A549 (cell line): ENCODE measurements at regions of chr19 and their contacts with region 1.

Region 1: GRCh38 chr19:29528350-29528945 is 2.7 kb downstream of the VSTM2B start:
- DNase-seq: peak; percentile 90 to 91
- ATAC-seq: peak; percentile 78 to 94
- H3K4me3 ChIP-seq: peak overlapping the region; percentile 47
- H3K27ac ChIP-seq: peak overlapping the region in 1 of 2 experiments; percentile 53; a peak in 3 of 6 replicates
- H3K4me1 ChIP-seq: peaks cover 12% of the 10 kb centered on the region
- CTCF ChIP-seq: peak; percentile 96
- EP300 ChIP-seq: no peak
- POLR2A ChIP-seq: no peak
- RAD21 ChIP-seq: peak; percentile 93 to 97

Region 2: GRCh38 chr19:29233591-29233990 is 294.9 kb before region 1 on chr19:
- CTCF ChIA-PET with region 1: no interaction called
- POLR2A ChIA-PET with region 1: no interaction called
- DNase-seq: no peak
- ATAC-seq: no peak; a peak in 2 of 6 replicates
- H3K4me3 ChIP-seq: no peak overlapping the region
- H3K27ac ChIP-seq: no peak overlapping the region
- H3K4me1 ChIP-seq: no peaks in the 10 kb centered on the region
- CTCF ChIP-seq: no peak
- EP300 ChIP-seq: no peak
- POLR2A ChIP-seq: no peak
- RAD21 ChIP-seq: no peak

Region 3: DNA sequence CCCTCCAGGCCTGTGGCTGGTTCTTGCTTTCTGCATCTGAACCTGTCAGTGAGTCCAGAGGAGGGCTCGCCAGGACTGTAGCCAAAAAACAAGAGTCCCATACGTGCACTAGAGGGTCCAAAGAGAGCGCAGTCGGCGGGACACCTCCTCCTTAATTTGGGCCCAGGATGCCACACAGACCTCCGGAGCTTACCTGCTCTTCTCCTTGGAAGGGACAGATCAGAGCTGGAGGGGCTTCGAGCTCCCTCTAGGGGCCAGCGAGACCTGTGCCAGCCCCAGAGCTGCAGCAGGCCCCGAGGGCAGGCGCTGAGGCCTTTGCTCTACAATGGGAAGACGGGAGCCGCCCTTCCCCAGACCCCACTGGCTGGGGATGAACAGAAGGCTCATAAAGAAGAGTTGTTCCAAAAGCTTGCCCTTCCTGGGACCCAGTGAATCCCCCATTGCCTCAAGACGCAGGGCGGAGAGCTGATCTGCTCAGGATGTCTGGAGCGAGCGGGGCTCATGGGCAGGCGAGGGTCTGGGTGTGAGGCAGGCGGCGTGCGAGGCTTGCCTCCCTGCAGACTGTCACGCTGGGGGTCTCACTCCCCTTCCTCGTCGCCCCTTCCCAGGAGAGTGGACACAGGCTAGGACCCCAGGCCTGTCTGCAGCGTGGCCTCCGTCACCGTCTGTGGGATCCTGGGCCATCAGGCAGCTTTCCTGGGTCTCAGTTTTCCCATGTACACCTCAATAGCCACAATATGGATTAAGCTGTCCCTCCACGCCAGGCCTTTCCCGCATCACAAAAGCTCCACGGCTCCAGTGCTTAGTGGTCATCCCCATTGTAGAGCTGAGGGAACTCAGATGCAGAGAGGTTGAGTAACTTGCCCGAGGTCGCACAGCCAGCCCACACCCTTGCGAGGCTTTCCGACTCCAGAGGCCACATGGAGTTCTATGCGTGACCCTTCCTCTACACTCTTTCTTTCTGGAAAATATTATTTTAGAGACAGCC is 49.6 kb before region 1 on chr19:
- CTCF ChIA-PET with region 1: interaction called, 11 read pairs
- POLR2A ChIA-PET with region 1: no interaction called
- DNase-seq: peak; percentile 50 to 55
- ATAC-seq: peak; percentile 78 to 96
- H3K4me3 ChIP-seq: no peak overlapping the region
- H3K27ac ChIP-seq: no peak overlapping the region
- H3K4me1 ChIP-seq: no peaks in the 10 kb centered on the region
- CTCF ChIP-seq: peak; percentile 40
- EP300 ChIP-seq: no peak
- POLR2A ChIP-seq: no peak
- RAD21 ChIP-seq: peak; percentile 38 to 55; a peak in 3 of 5 replicates

Region 4: GRCh38 chr19:29503140-29503758 is 25.2 kb before region 1 on chr19:
- CTCF ChIA-PET with region 1: interaction called, 10 read pairs
- POLR2A ChIA-PET with region 1: no interaction called
- DNase-seq: no peak
- ATAC-seq: no peak
- H3K4me3 ChIP-seq: no peak overlapping the region
- H3K27ac ChIP-seq: no peak overlapping the region
- H3K4me1 ChIP-seq: no peaks in the 10 kb centered on the region
- CTCF ChIP-seq: no peak
- EP300 ChIP-seq: no peak
- POLR2A ChIP-seq: no peak
- RAD21 ChIP-seq: no peak

Region 5: DNA sequence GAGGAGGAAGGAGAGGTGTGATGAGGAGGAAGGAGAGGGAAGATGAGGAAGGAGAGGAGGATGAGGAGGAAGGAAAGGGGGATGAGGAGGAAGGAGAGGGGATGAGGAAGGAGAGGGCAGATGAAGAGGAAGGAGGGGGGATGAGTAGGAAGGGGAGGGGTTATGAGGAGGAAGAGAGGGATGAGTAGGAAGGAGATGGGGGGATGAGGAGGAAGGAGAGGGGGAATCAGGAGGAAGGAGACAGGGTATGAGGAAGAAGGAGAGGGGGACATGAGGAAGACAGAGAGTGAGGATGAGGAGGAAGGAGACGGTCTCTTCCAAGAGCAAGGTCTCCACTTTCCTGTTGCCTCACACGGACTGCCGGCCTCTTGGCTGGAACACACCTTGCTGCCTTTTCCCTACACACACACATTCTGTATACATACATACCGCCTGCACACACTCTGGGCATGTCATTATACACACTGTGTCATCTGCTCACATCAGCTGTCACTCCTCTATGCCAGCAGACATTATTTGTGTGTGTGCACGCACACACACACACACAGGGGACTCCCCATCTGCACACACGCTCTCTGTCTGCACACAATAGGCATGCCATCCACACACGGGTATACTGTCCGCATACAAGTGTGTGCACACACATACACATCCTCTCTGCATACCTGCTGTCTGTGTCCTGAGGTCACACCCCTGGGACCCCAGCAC is 13.8 kb before region 1 on chr19:
- CTCF ChIA-PET with region 1: interaction called, 47 read pairs
- POLR2A ChIA-PET with region 1: no interaction called
- DNase-seq: peak in 1 of 2 experiments; percentile 59
- ATAC-seq: peak; percentile 62 to 76
- H3K4me3 ChIP-seq: no peak overlapping the region
- H3K27ac ChIP-seq: no peak overlapping the region
- H3K4me1 ChIP-seq: no peaks in the 10 kb centered on the region
- CTCF ChIP-seq: no peak
- EP300 ChIP-seq: no peak
- POLR2A ChIP-seq: no peak
- RAD21 ChIP-seq: no peak

Region 6: GRCh38 chr19:29539670-29540069 is 11.2 kb after region 1 on chr19:
- CTCF ChIA-PET with region 1: interaction called, 56 read pairs
- POLR2A ChIA-PET with region 1: no interaction called
- DNase-seq: no peak
- ATAC-seq: no peak
- H3K4me3 ChIP-seq: no peak overlapping the region
- H3K27ac ChIP-seq: no peak overlapping the region
- H3K4me1 ChIP-seq: no peaks in the 10 kb centered on the region
- CTCF ChIP-seq: no peak
- EP300 ChIP-seq: no peak
- POLR2A ChIP-seq: no peak
- RAD21 ChIP-seq: no peak

Region 7: DNA sequence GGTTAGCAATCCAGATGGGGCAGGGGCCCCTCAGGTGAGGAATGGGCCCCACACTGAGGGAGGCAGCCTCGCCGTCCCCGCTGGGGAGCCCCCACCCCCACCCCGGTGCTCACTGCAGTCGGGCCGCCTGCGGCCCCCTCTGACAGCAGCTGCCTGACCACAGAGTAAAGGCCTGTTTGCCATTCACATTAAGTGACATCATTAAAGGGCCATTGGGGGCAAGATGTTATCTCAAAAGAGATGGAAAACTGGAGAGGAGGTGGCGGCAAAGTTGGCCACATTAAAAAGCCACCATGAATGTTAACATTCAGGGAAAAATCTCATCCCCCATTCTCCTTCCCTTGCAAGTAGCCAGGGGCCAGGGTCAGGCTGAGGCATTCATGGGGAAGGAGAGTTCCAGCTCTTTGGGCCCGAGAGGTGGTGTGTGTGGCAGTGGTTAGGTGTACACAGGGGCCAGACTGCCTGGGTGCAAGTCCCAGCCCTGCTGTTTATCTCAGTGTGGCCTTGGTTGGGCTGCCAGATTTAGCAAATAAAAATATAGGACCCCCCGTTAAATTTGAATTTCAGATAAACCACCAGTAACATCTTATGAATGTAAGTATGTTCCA is 18.2 kb after region 1 on chr19:
- CTCF ChIA-PET with region 1: interaction called, 56 read pairs
- POLR2A ChIA-PET with region 1: no interaction called
- DNase-seq: no peak
- ATAC-seq: no peak
- H3K4me3 ChIP-seq: no peak overlapping the region
- H3K27ac ChIP-seq: no peak overlapping the region
- H3K4me1 ChIP-seq: no peaks in the 10 kb centered on the region
- CTCF ChIP-seq: no peak
- EP300 ChIP-seq: no peak
- POLR2A ChIP-seq: no peak
- RAD21 ChIP-seq: no peak